Heart right ventricle (tissue), 16 donors: ENCODE measurements at regions of chr5 and their contacts with region 1.

Region 1: DNA sequence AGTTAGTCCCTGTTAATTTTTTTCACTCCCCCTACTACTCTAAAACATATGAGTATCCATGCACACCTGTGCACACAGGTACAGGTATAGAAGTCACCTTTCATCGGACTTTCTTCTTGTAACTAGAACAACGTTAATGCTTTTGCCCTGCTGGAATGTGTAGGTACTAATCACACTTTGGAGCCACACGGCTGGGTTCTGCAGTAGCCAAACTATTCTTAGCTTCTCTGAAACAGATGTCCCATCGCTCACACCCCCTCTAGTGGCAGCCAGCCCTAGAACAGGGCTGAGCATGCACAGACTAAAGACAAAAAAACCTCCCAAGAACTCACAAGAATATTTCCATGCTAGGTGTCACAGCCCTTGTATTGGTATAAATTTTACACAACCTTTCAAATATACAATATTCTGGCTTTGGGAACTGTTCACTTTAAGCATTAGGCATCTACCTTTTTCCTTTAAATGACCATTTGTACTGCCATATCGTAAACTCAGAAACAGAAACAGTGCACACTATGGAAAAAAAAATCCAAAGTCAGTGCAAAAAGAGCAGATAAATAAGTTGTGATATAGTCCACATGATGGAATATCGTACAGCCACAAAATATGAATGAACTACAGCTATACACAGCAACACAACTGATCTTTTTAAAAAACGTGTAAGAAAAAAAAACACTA is 64.0 kb downstream of the RETREG1 start:
- DNase-seq: peak; percentile 74 to 75
- ATAC-seq: peak; percentile 81 to 93 (median 87)
- H3K4me3 ChIP-seq: no peak overlapping the region
- H3K27ac ChIP-seq: peak overlapping the region in 7 of 10 donors; percentile 9 to 57 (median 34)
- H3K4me1 ChIP-seq: peaks cover 0 to 31% (median 5%) of the 10 kb centered on the region in 9 donors
- H3K27me3 ChIP-seq: no peaks in the 10 kb centered on the region
- CTCF ChIP-seq: peak; percentile 56 to 85 (median 78)

Region 2: GRCh38 chr5:14744296-14745187 is 1808.3 kb before region 1 on chr5:
- intact Hi-C with region 1: no loop called
- DNase-seq: peak; percentile 25 to 33
- ATAC-seq: peak; percentile 28 to 85 (median 66)
- H3K4me3 ChIP-seq: no peak overlapping the region
- H3K27ac ChIP-seq: peak overlapping the region in 9 of 10 donors; percentile 3 to 64 (median 42)
- H3K4me1 ChIP-seq: peaks cover 0 to 47% (median 25%) of the 10 kb centered on the region in 9 donors
- H3K27me3 ChIP-seq: no peaks in the 10 kb centered on the region
- CTCF ChIP-seq: no peak

Region 3: DNA sequence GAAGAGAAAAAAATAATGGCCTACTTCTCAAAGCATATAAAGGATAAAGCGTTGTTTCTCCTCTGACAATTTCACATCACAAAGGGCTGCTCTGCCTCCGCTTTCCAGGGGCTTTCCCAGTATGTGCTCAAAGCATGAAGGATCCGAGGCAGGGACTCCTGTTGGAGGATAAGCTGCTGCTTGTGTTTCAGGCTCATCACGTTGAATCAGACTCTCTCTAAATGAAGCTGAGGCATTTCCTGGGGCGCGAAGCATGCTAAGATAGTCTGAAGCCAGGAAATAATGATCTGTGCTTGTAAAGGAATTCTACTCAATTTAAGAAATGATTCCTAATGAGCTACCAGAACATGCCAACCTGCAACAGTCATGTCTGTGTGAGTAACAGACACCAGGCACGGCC is 470.8 kb before region 1 on chr5:
- intact Hi-C with region 1: no loop called
- DNase-seq: no peak
- ATAC-seq: no peak
- H3K4me3 ChIP-seq: no peak overlapping the region
- H3K27ac ChIP-seq: no peak overlapping the region
- H3K4me1 ChIP-seq: peaks cover 0 to 16% (median 6%) of the 10 kb centered on the region in 9 donors
- H3K27me3 ChIP-seq: no peaks in the 10 kb centered on the region
- CTCF ChIP-seq: no peak

Region 4: DNA sequence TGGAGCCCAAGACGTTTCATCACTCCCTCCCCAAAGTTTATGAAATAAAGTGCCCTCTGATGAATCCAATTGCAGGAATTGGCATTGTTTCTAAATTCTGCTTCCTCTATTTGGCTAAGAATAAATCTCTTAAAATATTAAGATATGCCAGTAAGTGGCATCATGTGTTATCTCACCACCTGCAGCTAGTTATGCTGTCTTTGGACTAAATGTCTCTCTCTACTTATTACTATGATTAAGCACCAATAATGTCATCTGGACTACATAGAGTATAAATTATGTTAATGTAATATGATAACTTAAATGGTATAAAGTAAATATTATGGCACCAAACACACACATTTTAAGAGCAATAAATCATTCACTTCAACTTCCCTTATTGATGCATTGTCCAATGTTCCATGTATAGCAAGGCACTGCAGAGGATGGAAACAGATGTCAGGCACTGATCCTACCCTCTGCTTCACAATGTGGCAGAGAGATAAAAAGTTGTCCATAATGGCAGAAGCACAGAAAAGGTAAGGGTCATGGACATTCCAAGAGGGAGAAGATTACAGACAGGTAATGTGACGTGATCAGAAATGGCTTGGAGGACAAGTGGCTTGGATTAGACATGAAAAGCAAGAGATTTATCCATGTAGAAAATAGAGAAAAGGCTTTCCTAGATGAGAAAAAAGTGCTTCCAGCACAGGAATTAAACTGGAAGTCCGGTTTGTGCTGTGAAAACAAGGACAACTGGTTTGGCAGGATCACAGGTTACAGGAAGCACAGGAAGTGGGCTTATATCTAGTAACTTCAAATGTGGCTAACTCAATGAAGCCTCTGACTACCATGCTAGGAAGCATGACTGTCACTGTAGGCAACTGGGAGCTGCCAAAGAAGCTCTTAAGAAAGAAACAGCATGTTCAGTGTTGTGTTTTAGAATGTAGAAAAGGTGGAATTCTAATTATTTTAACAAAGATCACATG is 399.9 kb before region 1 on chr5:
- intact Hi-C with region 1: loop called in 1 of 10 experiments (anchors 10 kb)
- DNase-seq: no peak
- ATAC-seq: peak in 1 of 8 donors; percentile 33
- H3K4me3 ChIP-seq: peak overlapping the region in 3 of 10 donors; percentile 14 to 23 (median 18)
- H3K27ac ChIP-seq: peak overlapping the region in 7 of 10 donors; percentile 17 to 60 (median 45)
- H3K4me1 ChIP-seq: peaks cover 0 to 11% (median 0%) of the 10 kb centered on the region in 9 donors
- H3K27me3 ChIP-seq: no peaks in the 10 kb centered on the region
- CTCF ChIP-seq: no peak

Region 5: DNA sequence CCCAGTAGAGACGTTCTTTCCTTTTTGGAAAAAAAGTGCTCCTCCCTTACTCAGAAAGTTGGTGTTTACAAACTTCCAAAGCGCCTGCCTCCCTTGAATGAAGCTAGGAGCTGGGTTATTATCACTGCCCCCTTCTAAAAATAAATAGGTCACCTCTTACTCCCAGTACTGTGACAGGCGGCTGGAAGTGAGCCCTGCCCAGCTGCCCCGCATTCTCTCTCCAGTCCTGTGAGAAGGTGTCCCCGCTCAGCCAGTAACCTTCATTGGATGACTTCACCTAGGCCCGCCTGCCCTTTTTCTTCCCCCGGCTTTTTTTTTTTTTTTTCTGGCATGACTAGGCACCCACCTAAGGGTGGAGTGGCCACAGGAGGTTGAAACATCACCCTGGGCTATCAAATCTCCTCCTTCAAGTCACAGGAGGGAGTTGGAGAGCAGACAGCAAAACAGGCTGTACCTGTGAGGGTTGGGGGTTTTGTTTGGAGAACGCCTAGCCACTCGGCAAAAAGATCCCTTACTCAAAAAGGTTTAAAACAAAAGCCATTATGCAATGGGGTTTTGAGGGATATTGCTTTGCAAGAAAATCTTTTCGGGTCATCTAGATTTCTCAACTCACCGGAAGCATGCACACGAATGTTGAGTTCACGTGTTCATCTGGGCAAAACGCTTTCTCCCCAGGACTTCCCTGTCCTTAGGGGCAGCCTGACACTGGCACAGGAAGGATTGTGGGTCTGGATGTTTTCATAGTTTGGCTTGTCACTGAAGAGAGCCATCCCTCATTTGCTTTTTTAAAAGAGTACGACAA is 43.9 kb before region 1 on chr5:
- intact Hi-C with region 1: loop called in 2 of 10 experiments (anchors 5 kb)
- DNase-seq: peak; percentile 74 to 75
- ATAC-seq: peak; percentile 84 to 95 (median 94)
- H3K4me3 ChIP-seq: peak overlapping the region; percentile 4 to 60 (median 48)
- H3K27ac ChIP-seq: peak overlapping the region; percentile 57 to 96 (median 88)
- H3K4me1 ChIP-seq: peaks cover 0 to 25% (median 7%) of the 10 kb centered on the region in 9 donors
- H3K27me3 ChIP-seq: no peaks in the 10 kb centered on the region
- CTCF ChIP-seq: no peak

Region 6: GRCh38 chr5:16616536-16617273 is 63.9 kb after region 1 on chr5 and contains the start of gene RETREG1:
- intact Hi-C with region 1: loop called in 1 of 10 experiments (anchors 2 kb)
- DNase-seq: peak; percentile 68 to 76
- ATAC-seq: peak; percentile 81 to 91 (median 88)
- H3K4me3 ChIP-seq: peak within 1 kb of the TSS; percentile 59 to 94 (median 74)
- H3K27ac ChIP-seq: peak within 1 kb of the TSS; percentile 47 to 88 (median 76)
- H3K4me1 ChIP-seq: peaks cover 0 to 24% (median 12%) of the 10 kb centered on the region in 9 donors
- H3K27me3 ChIP-seq: peaks cover 0 to 15% (median 0%) of the 10 kb centered on the region in 7 donors
- CTCF ChIP-seq: no peak
- total RNA-seq, gene RETREG1: 156 to 337 (median 216) TPM

Region 7: GRCh38 chr5:16666883-16667398 is 114.1 kb after region 1 on chr5:
- intact Hi-C with region 1: loop called in 4 of 10 experiments (anchors 5 to 10 kb)
- DNase-seq: peak; percentile 58 to 60
- ATAC-seq: peak; percentile 73 to 91 (median 80)
- H3K4me3 ChIP-seq: peak overlapping the region in 3 of 10 donors; percentile 11 to 17 (median 15)
- H3K27ac ChIP-seq: peak overlapping the region in 8 of 10 donors; percentile 23 to 74 (median 52)
- H3K4me1 ChIP-seq: peaks cover 0 to 44% (median 26%) of the 10 kb centered on the region in 9 donors
- H3K27me3 ChIP-seq: no peaks in the 10 kb centered on the region
- CTCF ChIP-seq: peak; percentile 19 to 62 (median 45)

Region 8: DNA sequence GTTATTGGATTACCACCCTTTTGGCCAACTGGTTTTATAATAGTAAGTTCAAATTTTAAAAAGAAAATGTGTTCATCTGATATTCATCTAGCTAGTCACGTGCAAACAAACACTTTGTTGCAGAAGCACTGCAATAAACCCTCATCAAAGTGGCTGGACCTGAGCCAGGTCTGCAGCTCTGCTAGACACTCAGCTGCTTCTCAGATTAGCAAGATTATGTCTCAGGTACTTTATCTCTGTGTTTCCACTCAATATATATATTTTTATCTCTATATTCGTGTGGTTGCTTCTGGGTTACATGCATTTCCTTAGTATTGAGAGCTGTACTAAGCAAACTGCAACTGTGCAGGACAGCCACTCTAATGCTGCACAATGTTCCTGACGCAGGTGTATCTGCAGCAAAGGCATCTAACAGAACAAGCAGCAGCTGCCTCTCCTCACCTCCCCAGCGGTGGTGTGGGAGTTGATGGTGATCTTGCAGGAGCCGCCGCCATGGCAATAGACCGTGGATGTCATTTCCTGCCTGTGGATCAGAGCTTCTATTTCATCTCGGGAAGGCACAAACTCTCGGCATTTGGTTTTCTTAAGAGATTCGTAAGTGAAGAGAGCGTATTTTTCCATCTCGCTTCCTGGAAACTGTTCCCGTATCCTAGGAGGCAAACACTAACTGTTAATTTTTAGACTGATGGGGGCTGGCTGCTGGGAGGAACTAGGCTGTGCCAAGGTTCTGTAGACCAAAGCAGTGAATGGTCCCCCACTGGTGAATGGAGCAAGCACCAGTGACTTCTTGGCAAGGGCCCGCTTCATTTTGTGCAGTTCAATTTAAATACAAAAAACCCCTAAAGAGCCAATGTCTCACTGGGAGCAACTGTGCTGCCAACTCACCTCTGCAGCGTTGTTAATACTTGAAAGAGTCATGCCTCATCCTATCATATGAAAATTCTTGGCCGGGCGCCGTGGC is 120.7 kb after region 1 on chr5:
- intact Hi-C with region 1: loop called in 4 of 10 experiments (anchors 5 to 10 kb)
- DNase-seq: no peak
- ATAC-seq: no peak
- H3K4me3 ChIP-seq: no peak overlapping the region
- H3K27ac ChIP-seq: no peak overlapping the region
- H3K4me1 ChIP-seq: peaks cover 0 to 13% (median 5%) of the 10 kb centered on the region in 9 donors
- H3K27me3 ChIP-seq: no peaks in the 10 kb centered on the region
- CTCF ChIP-seq: no peak